Transverse colon (tissue), 4 donors: ENCODE measurements at regions of chr1 and their contacts with region 1.

Region 1: DNA sequence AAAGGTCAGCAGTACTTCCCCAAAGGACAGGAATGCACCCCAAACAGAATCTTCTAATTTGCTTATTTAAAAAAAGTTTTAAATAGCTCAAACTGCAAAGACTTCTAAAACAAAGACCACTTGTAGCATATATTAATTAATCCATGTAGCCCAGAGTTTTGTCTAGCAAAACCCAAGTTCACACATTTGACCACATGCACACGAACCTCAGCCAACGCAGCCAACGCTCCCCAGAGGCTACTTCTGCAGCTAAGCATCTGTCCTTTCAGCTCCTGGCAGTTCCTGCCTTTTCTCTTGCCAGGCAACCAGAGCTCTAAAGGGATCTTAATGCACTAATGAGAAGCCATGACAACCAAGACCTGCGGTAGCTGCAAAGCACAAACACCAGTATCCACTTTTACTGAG is 89.6 kb downstream of the RERE start:
- DNase-seq: no peak
- H3K4me3 ChIP-seq: no peak overlapping the region
- H3K27ac ChIP-seq: no peak overlapping the region
- H3K4me1 ChIP-seq: peaks cover 0 to 26% (median 4%) of the 10 kb centered on the region in 4 donors
- H3K27me3 ChIP-seq: no peaks in the 10 kb centered on the region
- CTCF ChIP-seq: no peak
- EP300 ChIP-seq: no peak
- POLR2A ChIP-seq: no peak

Region 2: DNA sequence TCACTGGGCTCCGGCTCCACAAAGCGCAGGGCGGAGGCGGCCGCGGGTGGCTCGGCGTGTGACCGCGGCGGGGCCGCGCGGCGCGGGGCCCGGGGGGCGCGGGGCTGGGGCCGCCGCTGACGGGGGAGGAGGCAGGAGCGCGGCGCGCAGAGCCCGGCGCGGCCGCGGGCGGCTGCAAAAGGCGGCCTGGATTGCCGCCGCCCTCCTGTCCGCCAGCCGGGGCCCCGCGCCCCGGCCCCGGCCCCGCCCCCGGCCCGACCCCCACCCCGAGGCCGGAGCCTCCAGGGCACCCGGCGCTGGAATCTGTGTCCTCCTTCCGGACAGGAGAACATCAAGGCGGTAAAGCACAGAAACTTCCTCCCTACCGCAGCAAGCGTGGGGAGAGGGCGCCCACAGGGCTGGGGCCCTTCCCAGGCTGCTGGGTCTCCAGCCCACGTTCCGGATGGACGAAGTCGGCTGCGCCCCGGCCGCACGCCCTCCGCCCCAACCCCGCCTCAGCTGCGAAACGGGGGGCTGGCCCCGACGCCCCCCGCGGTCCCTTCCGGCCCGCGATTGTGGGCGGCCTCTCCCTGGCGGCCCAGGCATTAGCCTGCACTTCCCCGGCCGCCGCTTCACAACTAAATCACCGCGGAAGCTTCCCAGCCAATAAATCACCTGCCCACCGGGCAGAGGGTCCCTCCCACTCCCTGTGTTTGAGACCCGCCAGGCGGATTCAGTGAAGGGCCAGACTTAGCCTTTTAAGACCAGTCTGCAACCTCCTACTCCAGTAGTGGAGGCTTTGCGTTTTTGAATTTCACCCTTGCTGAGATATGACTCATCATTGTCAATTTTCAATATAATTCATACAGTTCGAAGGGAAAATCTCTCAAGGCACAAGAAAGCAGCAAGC is 303.9 kb before region 1 on chr1:
- in situ Hi-C with region 1: no loop called
- intact Hi-C with region 1: loop called (anchors 10 kb)
- DNase-seq: peak; percentile 63
- H3K4me3 ChIP-seq: peak overlapping the region; percentile 81 to 97 (median 91)
- H3K27ac ChIP-seq: peak overlapping the region; percentile 98 to 100 (median 99)
- H3K4me1 ChIP-seq: peaks cover 22 to 73% (median 45%) of the 10 kb centered on the region in 4 donors
- H3K27me3 ChIP-seq: no peaks in the 10 kb centered on the region
- CTCF ChIP-seq: peak in 4 of 5 experiments; percentile 10 to 60 (median 38)
- EP300 ChIP-seq: no peak
- POLR2A ChIP-seq: no peak

Region 3: GRCh38 chr1:8560611-8561544 is 166.9 kb before region 1 on chr1:
- in situ Hi-C with region 1: loop called in 3 of 4 experiments (anchors 5 to 10 kb)
- intact Hi-C with region 1: loop called (anchors 1 kb)
- DNase-seq: no peak
- H3K4me3 ChIP-seq: no peak overlapping the region
- H3K27ac ChIP-seq: no peak overlapping the region
- H3K4me1 ChIP-seq: peaks cover 0 to 15% (median 3%) of the 10 kb centered on the region in 4 donors
- H3K27me3 ChIP-seq: no peaks in the 10 kb centered on the region
- CTCF ChIP-seq: peak; percentile 89 to 95 (median 93)
- EP300 ChIP-seq: no peak
- POLR2A ChIP-seq: no peak

Region 4: GRCh38 chr1:8567146-8567545 is 160.7 kb before region 1 on chr1:
- in situ Hi-C with region 1: loop called in 3 of 4 experiments (anchors 5 to 10 kb)
- intact Hi-C with region 1: no loop called
- DNase-seq: no peak
- H3K4me3 ChIP-seq: no peak overlapping the region
- H3K27ac ChIP-seq: no peak overlapping the region
- H3K4me1 ChIP-seq: peaks cover 0 to 25% (median 1%) of the 10 kb centered on the region in 4 donors
- H3K27me3 ChIP-seq: no peaks in the 10 kb centered on the region
- CTCF ChIP-seq: no peak
- EP300 ChIP-seq: no peak
- POLR2A ChIP-seq: no peak

Region 5: DNA sequence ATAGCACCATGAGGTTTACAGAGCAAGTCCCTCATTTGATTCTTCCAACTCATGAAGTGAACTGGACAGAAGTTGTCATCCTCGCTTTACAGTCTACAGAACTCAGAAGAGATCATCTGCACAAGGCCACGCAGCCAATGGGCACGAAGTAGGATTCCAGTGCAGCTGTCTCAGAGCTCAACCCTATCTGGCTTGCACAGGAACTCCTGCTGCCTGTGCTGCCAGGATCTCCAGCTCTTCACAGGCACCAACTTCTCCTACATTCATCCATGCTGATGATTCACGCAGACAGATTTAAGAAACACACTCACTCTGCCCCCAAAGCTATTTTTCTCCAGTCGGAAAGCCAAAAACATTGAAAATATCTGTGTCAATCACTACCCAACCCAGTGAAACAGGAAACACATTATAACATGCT is 67.4 kb before region 1 on chr1:
- in situ Hi-C with region 1: no loop called
- intact Hi-C with region 1: loop called (anchors 5 kb)
- DNase-seq: no peak
- H3K4me3 ChIP-seq: no peak overlapping the region
- H3K27ac ChIP-seq: peak overlapping the region; percentile 33 to 69 (median 56)
- H3K4me1 ChIP-seq: peaks cover 34 to 65% (median 41%) of the 10 kb centered on the region in 4 donors
- H3K27me3 ChIP-seq: no peaks in the 10 kb centered on the region
- CTCF ChIP-seq: no peak
- EP300 ChIP-seq: no peak
- POLR2A ChIP-seq: no peak

Region 6: GRCh38 chr1:8848663-8849386 is 121.0 kb after region 1 on chr1:
- in situ Hi-C with region 1: no loop called
- intact Hi-C with region 1: loop called (anchors 10 kb)
- DNase-seq: peak; percentile 92
- H3K4me3 ChIP-seq: no peak overlapping the region
- H3K27ac ChIP-seq: peak overlapping the region; percentile 36 to 73 (median 65)
- H3K4me1 ChIP-seq: peaks cover 4 to 24% (median 15%) of the 10 kb centered on the region in 4 donors
- H3K27me3 ChIP-seq: no peaks in the 10 kb centered on the region
- CTCF ChIP-seq: peak; percentile 86 to 94 (median 93)
- EP300 ChIP-seq: no peak
- POLR2A ChIP-seq: no peak